Endothelial cell of umbilical vein (primary cell): ENCODE measurements at regions of chr13 and their contacts with region 1.

Region 1: GRCh38 chr13:74115138-74115537 is 19.1 kb downstream of the KLF12 start:
- DNase-seq: peak; percentile 88
- H3K4me3 ChIP-seq: no peak overlapping the region
- H3K27ac ChIP-seq: peak overlapping the region; percentile 71
- H3K4me1 ChIP-seq: peaks cover 55% of the 10 kb centered on the region
- H3K27me3 ChIP-seq: no peaks in the 10 kb centered on the region
- CTCF ChIP-seq: no peak
- POLR2A ChIP-seq: no peak

Region 2: GRCh38 chr13:73754727-73755292 is 360.3 kb before region 1 on chr13:
- CTCF ChIA-PET with region 1: no interaction called
- POLR2A ChIA-PET with region 1: no interaction called
- dilution Hi-C with region 1: no loop called
- intact Hi-C with region 1: loop called (anchors 1 kb)
- DNase-seq: peak; percentile 79
- H3K4me3 ChIP-seq: no peak overlapping the region
- H3K27ac ChIP-seq: no peak overlapping the region
- H3K4me1 ChIP-seq: no peaks in the 10 kb centered on the region
- H3K27me3 ChIP-seq: no peaks in the 10 kb centered on the region
- CTCF ChIP-seq: peak; percentile 36 to 51
- POLR2A ChIP-seq: no peak

Region 3: GRCh38 chr13:73835138-73835721 is 279.9 kb before region 1 on chr13:
- CTCF ChIA-PET with region 1: interaction called, 3 read pairs
- POLR2A ChIA-PET with region 1: no interaction called
- dilution Hi-C with region 1: no loop called
- intact Hi-C with region 1: loop called (anchors 5 kb)
- DNase-seq: peak; percentile 55
- H3K4me3 ChIP-seq: no peak overlapping the region
- H3K27ac ChIP-seq: no peak overlapping the region
- H3K4me1 ChIP-seq: peaks cover 4% of the 10 kb centered on the region
- H3K27me3 ChIP-seq: no peaks in the 10 kb centered on the region
- CTCF ChIP-seq: peak; percentile 27 to 37
- POLR2A ChIP-seq: no peak

Region 4: GRCh38 chr13:74070065-74070464 is 45.1 kb before region 1 on chr13:
- CTCF ChIA-PET with region 1: interaction called, 4 read pairs
- POLR2A ChIA-PET with region 1: no interaction called
- dilution Hi-C with region 1: no loop called
- intact Hi-C with region 1: loop called (anchors 5 kb)
- DNase-seq: no peak
- H3K4me3 ChIP-seq: no peak overlapping the region
- H3K27ac ChIP-seq: no peak overlapping the region
- H3K4me1 ChIP-seq: peaks cover 21% of the 10 kb centered on the region
- H3K27me3 ChIP-seq: no peaks in the 10 kb centered on the region
- CTCF ChIP-seq: no peak
- POLR2A ChIP-seq: no peak

Region 5: GRCh38 chr13:74128156-74128767 is 13.1 kb after region 1 on chr13:
- CTCF ChIA-PET with region 1: interaction called, 3 read pairs
- POLR2A ChIA-PET with region 1: no interaction called
- dilution Hi-C with region 1: no loop called
- intact Hi-C with region 1: loop called (anchors 1 kb)
- DNase-seq: peak; percentile 80
- H3K4me3 ChIP-seq: peak overlapping the region in 1 of 3 experiments; percentile 48
- H3K27ac ChIP-seq: peak overlapping the region; percentile 50
- H3K4me1 ChIP-seq: peaks cover 32% of the 10 kb centered on the region
- H3K27me3 ChIP-seq: no peaks in the 10 kb centered on the region
- CTCF ChIP-seq: no peak
- POLR2A ChIP-seq: no peak

Region 6: DNA sequence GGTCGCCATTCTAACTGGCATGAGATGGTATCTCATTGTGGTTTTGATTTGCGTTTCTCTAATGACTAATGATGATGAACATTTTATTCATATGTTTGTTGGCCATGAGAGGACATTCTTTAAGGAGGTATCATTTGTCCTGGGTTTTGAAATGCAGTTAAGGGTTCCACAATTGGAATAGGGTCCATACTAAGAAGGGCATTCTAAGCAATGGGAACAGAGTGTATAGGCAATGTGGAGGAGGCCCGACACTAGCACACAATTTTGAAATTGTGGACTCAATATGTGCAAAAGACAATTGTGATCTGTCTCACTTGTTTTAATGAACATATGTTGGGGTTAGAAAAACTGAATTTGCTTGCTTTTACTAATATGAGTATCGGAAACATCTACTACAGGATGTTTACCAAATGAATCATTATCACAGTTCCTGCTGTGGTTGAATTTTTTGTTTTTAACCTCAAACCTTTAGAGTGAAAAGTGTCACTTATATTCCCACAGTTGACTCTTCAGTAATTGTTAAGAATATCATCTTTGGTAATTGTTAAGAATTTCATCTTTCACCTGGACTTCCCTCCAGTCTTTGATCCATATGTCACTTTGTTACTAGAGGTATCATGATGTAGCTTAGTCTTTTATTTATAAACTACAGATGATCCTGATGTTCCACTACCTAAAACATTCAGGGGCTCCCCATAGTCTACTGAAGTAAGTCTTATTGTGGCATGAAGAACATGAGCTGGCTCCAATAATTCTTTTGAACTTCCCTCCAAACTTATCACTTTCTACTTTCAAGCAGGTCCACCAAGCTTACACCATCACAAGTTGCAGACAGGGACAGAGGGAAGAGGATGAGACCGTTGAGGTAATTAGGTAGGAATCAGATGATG is 128.7 kb after region 1 on chr13:
- CTCF ChIA-PET with region 1: no interaction called
- POLR2A ChIA-PET with region 1: no interaction called
- dilution Hi-C with region 1: no loop called
- intact Hi-C with region 1: loop called (anchors 1 kb)
- DNase-seq: peak; percentile 59
- H3K4me3 ChIP-seq: no peak overlapping the region
- H3K27ac ChIP-seq: peak overlapping the region; percentile 77
- H3K4me1 ChIP-seq: peaks cover 13% of the 10 kb centered on the region
- H3K27me3 ChIP-seq: no peaks in the 10 kb centered on the region
- CTCF ChIP-seq: no peak
- POLR2A ChIP-seq: no peak